ENCODE measurements at regions of chr5 and their contacts with region 1.

Region 1: GRCh38 chr5:155368490-155368889 is 354.9 kb downstream of the KIF4B start:
- DNase-seq: no peak
- H3K4me3 ChIP-seq: no peak overlapping the region
- H3K27ac ChIP-seq: no peak overlapping the region
- H3K4me1 ChIP-seq: no peaks in the 10 kb centered on the region
- H3K27me3 ChIP-seq: no peaks in the 10 kb centered on the region
- CTCF ChIP-seq: no peak
- POLR2A ChIP-seq: no peak

Region 2: GRCh38 chr5:154916884-154917283 is 451.6 kb before region 1 on chr5:
- intact Hi-C with region 1: no loop called
- DNase-seq: no peak
- H3K4me3 ChIP-seq: no peak overlapping the region
- H3K27ac ChIP-seq: no peak overlapping the region
- H3K4me1 ChIP-seq: no peaks in the 10 kb centered on the region
- H3K27me3 ChIP-seq: no peaks in the 10 kb centered on the region
- CTCF ChIP-seq: no peak
- POLR2A ChIP-seq: no peak

Region 3: GRCh38 chr5:155700333-155700732 is 331.8 kb after region 1 on chr5:
- intact Hi-C with region 1: loop called (anchors 10 kb)
- DNase-seq: no peak
- H3K4me3 ChIP-seq: no peak overlapping the region
- H3K27ac ChIP-seq: no peak overlapping the region
- H3K4me1 ChIP-seq: no peaks in the 10 kb centered on the region
- H3K27me3 ChIP-seq: no peaks in the 10 kb centered on the region
- CTCF ChIP-seq: no peak
- POLR2A ChIP-seq: no peak

Region 4: DNA sequence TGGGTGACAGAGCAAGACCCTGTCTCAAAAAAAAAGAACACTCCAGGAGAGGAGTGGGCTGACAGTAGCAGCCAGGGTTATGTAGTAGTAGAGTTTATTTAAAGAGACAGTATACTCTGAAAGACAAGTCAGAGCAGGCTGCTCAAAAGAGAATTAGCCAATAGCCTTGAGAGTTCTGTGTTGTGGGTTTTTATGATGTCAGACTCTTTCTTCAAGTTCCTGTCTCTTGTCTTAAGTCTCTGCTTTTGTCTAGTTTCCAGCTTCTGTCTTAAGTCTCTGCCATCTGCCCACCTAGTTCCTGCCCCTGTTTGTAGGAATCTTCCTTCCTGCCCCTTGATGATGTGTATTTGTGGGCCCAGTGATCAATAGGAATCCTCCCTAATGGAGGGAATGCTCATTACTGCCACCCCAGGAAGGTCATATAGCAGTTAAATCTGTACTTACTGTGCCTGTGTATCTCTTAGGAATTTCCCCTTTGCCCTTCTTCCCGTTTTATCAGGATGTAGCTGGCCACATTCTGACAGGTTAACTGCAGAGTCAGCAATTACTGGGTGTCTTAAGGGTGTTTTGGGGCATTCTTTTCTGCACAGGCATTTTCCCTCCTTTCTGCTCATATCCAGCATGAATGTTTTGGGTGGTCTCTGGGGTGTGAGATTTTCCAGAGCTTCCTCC is 378.0 kb after region 1 on chr5:
- intact Hi-C with region 1: no loop called
- DNase-seq: no peak
- H3K4me3 ChIP-seq: no peak overlapping the region
- H3K27ac ChIP-seq: no peak overlapping the region
- H3K4me1 ChIP-seq: no peaks in the 10 kb centered on the region
- H3K27me3 ChIP-seq: no peaks in the 10 kb centered on the region
- CTCF ChIP-seq: no peak
- POLR2A ChIP-seq: no peak

Measured in prostate gland (tissue), 2 donors.